Activated CD4-positive, alpha-beta T cell treated with anti-CD3 and anti-CD28 coated beads, Interleukin-2, amount 10 ng/mL, durations not matched to agents 7 days and 5 days (primary cell): ENCODE measurements at regions of chr3 and their contacts with region 1.

Region 1: DNA sequence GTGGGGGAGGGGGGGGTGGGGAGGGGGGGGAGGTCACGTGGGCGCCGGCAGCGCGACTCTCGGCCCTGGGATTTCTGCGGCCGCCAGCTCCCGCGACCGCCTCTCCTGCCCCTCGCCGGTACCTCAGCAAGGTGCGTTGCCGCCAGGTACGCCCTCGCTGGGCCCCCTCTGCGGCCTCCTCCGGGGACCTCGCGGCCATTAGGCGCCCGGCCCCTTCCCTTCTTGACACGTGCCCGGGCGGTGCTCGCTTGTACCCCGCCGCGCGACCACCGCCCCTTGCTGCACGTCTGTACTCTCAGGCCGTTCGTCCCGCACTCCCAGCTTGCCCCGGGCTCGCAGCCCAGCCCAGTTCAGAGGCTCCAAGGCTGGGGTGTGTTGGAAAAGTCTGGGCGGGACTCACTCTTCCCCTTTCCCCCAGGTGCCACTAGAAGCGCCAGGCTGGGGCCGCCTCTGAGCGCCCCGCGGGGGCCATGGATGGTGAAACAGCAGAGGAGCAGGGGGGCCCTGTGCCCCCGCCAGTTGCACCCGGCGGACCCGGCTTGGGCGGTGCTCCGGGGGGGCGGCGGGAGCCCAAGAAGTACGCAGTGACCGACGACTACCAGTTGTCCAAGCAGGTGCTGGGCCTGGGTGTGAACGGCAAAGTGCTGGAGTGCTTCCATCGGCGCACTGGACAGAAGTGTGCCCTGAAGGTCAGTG is at the start of gene MAPKAPK3:
- DNase-seq: peak; percentile 31
- H3K4me3 Mint-ChIP-seq: peak within 1 kb of the TSS; percentile 76
- H3K27ac Mint-ChIP-seq: peak within 1 kb of the TSS; percentile 92
- H3K4me1 Mint-ChIP-seq: peaks cover 67% of the 10 kb centered on the region
- H3K27me3 Mint-ChIP-seq: no peaks in the 10 kb centered on the region
- total RNA-seq, gene MAPKAPK3: 135 to 140 TPM

Region 2: DNA sequence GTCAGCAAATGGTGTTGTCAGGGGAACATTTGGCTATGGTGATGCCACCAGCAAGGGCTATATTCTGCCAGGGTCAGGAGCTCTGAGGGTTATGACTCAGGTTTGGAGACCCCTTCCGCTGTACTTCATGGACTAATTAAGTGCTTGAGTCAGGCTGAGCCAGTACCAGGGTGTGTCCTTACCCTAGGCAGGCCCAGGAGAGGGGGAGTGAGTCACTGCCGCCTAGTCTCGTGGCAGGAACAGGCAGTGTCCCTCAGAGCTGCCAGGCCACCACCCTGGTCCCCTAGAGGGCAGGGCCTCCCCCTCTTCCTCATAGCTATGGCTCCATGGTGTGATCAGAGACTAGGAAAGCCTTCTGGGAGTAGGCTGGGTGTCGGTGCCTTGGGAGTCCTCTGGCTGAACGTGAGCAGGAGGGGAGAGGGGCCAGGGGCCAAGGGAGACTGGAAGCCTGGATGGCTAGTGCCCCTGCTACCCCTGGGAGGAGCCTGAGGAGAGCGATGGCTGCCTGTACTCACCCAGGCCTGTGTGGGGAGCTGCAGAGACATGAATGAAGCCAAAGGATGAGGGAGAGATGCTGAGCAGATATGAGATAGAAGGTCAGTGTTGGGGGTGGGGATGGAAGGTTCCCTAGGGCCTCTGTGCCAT is 10.3 kb after region 1 on chr3:
- CTCF ChIA-PET with region 1: interaction called, 33 read pairs
- POLR2A ChIA-PET with region 1: interaction called, 3 read pairs
- DNase-seq: no peak
- H3K4me3 Mint-ChIP-seq: no peak overlapping the region
- H3K27ac Mint-ChIP-seq: peak overlapping the region; percentile 9
- H3K4me1 Mint-ChIP-seq: peaks cover 97% of the 10 kb centered on the region
- H3K27me3 Mint-ChIP-seq: no peaks in the 10 kb centered on the region

Region 3: GRCh38 chr3:50652709-50653108 is 35.5 kb after region 1 on chr3:
- CTCF ChIA-PET with region 1: interaction called, 34 read pairs
- POLR2A ChIA-PET with region 1: interaction called, 3 read pairs
- DNase-seq: peak; percentile 60
- H3K4me3 Mint-ChIP-seq: no peak overlapping the region
- H3K27ac Mint-ChIP-seq: no peak overlapping the region
- H3K4me1 Mint-ChIP-seq: peaks cover 26% of the 10 kb centered on the region
- H3K27me3 Mint-ChIP-seq: no peaks in the 10 kb centered on the region

Region 4: DNA sequence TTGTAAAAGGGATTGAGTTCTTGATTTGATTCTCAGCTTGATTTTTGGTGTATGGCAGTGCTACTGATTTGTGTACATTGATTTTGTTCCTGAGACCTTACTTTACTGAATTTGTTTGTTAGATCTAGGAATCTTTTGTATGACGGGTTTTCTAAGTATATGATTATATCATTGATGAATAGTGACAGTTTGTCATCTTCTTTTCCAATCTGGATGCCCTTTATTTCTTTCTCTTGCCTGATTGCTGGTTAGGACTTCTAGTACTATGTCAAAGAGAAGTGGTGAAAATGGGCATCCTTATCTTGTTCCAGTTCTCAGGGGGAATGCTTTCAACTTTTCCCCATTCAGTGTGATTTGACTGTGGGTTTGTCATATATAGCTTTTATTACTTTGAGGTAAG is 160.4 kb after region 1 on chr3:
- CTCF ChIA-PET with region 1: no interaction called
- POLR2A ChIA-PET with region 1: no interaction called
- DNase-seq: no peak
- H3K4me3 Mint-ChIP-seq: no peak overlapping the region
- H3K27ac Mint-ChIP-seq: no peak overlapping the region
- H3K4me1 Mint-ChIP-seq: no peaks in the 10 kb centered on the region
- H3K27me3 Mint-ChIP-seq: peaks cover 27% of the 10 kb centered on the region